ENCODE measurements at regions of chr1 and their contacts with region 1.

Region 1: GRCh38 chr1:8727809-8728213 is 89.6 kb downstream of the RERE start:
- DNase-seq: no peak
- H3K4me3 ChIP-seq: no peak overlapping the region
- H3K27ac ChIP-seq: no peak overlapping the region
- H3K4me1 ChIP-seq: peaks cover 0 to 16% (median 3%) of the 10 kb centered on the region in 4 experiments
- H3K27me3 ChIP-seq: no peaks in the 10 kb centered on the region

Region 2: DNA sequence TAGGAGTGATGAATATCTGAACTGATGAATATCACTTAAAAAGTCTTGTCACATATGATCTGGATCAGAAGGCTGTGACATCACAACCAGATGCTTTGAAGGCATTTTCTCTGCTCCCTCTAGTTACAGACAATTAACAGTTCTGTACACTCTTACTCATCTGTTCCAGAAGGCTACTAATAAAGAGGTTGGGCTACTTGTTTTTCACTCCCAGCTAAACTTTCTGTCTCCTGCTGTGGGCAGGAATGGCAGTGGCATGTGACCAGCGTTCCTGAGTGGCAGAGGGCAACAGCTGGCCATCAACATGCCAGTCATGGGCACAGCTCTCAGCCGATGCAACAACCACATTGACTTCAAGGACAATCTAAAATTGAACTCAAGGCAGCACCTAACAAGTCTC is 343.2 kb before region 1 on chr1:
- CTCF ChIA-PET with region 1: interaction called, 10 read pairs
- POLR2A ChIA-PET with region 1: no interaction called
- DNase-seq: no peak
- H3K4me3 ChIP-seq: no peak overlapping the region
- H3K27ac ChIP-seq: no peak overlapping the region
- H3K4me1 ChIP-seq: peaks cover 16 to 38% (median 28%) of the 10 kb centered on the region in 4 experiments
- H3K27me3 ChIP-seq: no peaks in the 10 kb centered on the region

Region 3: GRCh38 chr1:8560611-8561544 is 166.9 kb before region 1 on chr1:
- CTCF ChIA-PET with region 1: interaction called, 145 read pairs
- POLR2A ChIA-PET with region 1: interaction called, 5 read pairs
- DNase-seq: peak; percentile 58 to 73 (median 71)
- H3K4me3 ChIP-seq: no peak overlapping the region
- H3K27ac ChIP-seq: peak overlapping the region in 1 of 2 experiments; percentile 32
- H3K4me1 ChIP-seq: peaks cover 4 to 24% (median 7%) of the 10 kb centered on the region in 4 experiments
- H3K27me3 ChIP-seq: no peaks in the 10 kb centered on the region

Region 4: DNA sequence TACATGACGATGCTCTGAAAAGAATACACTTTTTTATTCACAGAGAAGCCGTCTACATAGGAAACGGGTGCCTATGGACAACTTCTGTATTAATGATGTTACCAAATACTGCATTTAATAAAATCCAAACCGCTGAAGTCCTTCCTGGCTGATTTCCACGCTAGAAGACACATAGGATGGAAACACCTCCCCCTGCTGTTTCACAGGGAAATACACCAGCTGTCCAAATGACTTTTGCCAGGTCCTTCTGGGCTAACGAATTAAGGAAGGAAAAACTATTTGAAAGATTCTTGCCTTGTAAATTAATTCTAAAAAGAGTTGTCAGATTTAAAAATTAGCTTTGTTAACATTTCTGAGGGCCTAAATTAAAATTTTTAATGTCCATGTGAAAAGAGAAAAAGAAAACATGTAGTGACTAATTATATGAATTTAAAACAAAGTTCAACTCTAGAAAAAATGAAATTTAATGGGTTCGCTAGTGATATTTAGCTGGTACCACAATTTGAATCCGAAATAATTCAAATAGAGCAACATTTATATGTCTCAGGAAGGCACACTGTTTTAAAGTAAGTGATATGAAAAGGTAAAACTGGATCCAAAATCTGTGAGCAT is 56.4 kb before region 1 on chr1:
- CTCF ChIA-PET with region 1: interaction called, 15 read pairs
- POLR2A ChIA-PET with region 1: no interaction called
- DNase-seq: peak; percentile 78 to 82 (median 81)
- H3K4me3 ChIP-seq: no peak overlapping the region
- H3K27ac ChIP-seq: peak overlapping the region in 1 of 2 experiments; percentile 7
- H3K4me1 ChIP-seq: peaks cover 13 to 66% (median 35%) of the 10 kb centered on the region in 4 experiments
- H3K27me3 ChIP-seq: no peaks in the 10 kb centered on the region

Region 5: GRCh38 chr1:8740034-8740449 is 12.2 kb after region 1 on chr1:
- CTCF ChIA-PET with region 1: interaction called, 31 read pairs
- POLR2A ChIA-PET with region 1: no interaction called
- DNase-seq: no peak
- H3K4me3 ChIP-seq: no peak overlapping the region
- H3K27ac ChIP-seq: no peak overlapping the region
- H3K4me1 ChIP-seq: peaks cover 0 to 6% (median 5%) of the 10 kb centered on the region in 4 experiments
- H3K27me3 ChIP-seq: no peaks in the 10 kb centered on the region

Measured in common myeloid progenitor, CD34-positive (primary cell).